CD8-positive, alpha-beta memory T cell (primary cell): ENCODE measurements at regions of chr11 and their contacts with region 1.

Region 1: DNA sequence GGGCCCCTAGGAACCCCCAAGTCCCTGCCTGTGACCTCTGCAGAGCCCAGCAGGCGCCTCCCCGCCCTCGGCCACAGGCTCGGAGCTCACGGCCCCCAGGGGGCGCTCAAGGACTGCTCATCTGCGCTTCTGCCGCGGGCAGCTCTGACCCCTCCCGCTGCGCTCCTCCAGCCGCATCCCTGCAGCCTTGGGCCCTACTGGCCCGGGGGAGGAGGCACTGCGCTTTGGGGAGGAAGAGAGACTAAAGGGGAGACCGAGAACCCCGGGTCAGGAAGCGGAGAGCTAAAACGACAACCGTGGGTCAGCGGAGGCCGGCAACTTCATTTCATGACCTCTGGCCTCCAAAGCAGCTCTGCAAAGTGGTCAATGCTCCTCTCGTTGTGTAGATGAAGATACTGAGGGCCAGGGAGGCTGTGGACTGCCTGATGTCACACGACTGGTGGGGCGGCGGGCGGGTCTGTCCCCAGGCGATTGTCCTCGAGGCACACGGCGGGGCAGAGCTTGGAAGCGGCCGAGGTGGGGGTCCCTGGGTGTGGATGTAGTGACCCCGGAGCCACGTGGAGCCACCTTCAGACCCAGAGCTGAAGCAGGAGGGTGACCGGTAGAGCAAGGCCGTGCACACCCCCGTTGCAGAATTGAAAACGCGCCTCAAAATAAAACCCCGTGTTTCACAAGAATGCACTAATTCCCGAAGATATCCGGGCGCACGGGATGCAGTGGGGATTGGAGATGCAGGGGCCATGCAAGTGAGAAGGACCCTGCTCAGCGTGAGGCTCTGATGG is 2.7 kb upstream of the KRTAP5-6 start:
- DNase-seq: peak; percentile 63 to 82 (median 73)
- H3K4me3 ChIP-seq: no peak overlapping the region
- H3K4me3 Mint-ChIP-seq: no peak overlapping the region
- H3K27ac ChIP-seq: no peak overlapping the region
- H3K27ac Mint-ChIP-seq: peak overlapping the region in 1 of 8 donors; percentile 43
- H3K4me1 ChIP-seq: peaks cover 13% of the 10 kb centered on the region
- H3K4me1 Mint-ChIP-seq: peaks cover 4 to 9% (median 7%) of the 10 kb centered on the region in 3 donors
- H3K27me3 ChIP-seq: peaks cover 4% of the 10 kb centered on the region
- H3K27me3 Mint-ChIP-seq: peaks cover 17 to 43% of the 10 kb centered on the region in 2 donors

Region 2: DNA sequence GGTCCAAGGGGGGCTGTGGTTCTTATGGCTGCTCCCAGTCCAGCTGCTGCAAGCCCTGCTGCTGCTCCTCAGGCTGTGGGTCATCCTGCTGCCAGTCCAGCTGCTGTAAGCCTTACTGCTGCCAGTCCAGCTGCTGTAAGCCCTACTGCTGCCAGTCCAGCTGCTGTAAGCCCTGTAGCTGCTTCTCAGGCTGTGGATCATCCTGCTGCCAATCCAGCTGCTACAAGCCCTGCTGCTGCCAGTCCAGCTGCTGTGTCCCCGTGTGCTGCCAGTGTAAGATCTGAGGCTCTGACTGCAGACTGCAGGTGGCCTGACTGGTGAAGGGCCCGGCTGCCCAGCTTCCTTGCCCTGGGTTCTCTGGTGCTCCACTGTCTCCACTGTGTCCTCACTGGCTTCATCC is 64.0 kb before region 1 on chr11:
- CTCF ChIA-PET with region 1: no interaction called
- POLR2A ChIA-PET with region 1: no interaction called
- DNase-seq: no peak
- H3K4me3 ChIP-seq: no peak overlapping the region
- H3K4me3 Mint-ChIP-seq: no peak overlapping the region
- H3K27ac ChIP-seq: no peak overlapping the region
- H3K27ac Mint-ChIP-seq: no peak overlapping the region
- H3K4me1 ChIP-seq: peaks cover 7% of the 10 kb centered on the region
- H3K4me1 Mint-ChIP-seq: peaks cover 0 to 13% (median 6%) of the 10 kb centered on the region in 3 donors
- H3K27me3 ChIP-seq: peaks cover 17% of the 10 kb centered on the region
- H3K27me3 Mint-ChIP-seq: peaks cover 20 to 53% of the 10 kb centered on the region in 2 donors

Region 3: GRCh38 chr11:1652771-1653540 is 41.3 kb before region 1 on chr11:
- CTCF ChIA-PET with region 1: interaction called, 49 read pairs
- POLR2A ChIA-PET with region 1: no interaction called
- DNase-seq: peak; percentile 65 to 82 (median 71)
- H3K4me3 ChIP-seq: no peak overlapping the region
- H3K4me3 Mint-ChIP-seq: no peak overlapping the region
- H3K27ac ChIP-seq: no peak overlapping the region
- H3K27ac Mint-ChIP-seq: no peak overlapping the region
- H3K4me1 ChIP-seq: no peaks in the 10 kb centered on the region
- H3K4me1 Mint-ChIP-seq: no peaks in the 10 kb centered on the region
- H3K27me3 ChIP-seq: peaks cover 13% of the 10 kb centered on the region
- H3K27me3 Mint-ChIP-seq: peaks cover 15 to 45% of the 10 kb centered on the region in 2 donors

Region 4: GRCh38 chr11:1668911-1669473 is 25.3 kb before region 1 on chr11:
- CTCF ChIA-PET with region 1: no interaction called
- POLR2A ChIA-PET with region 1: no interaction called
- DNase-seq: peak in 1 of 5 donors; percentile 10
- H3K4me3 ChIP-seq: no peak overlapping the region
- H3K4me3 Mint-ChIP-seq: peak overlapping the region in 1 of 7 donors; percentile 19
- H3K27ac ChIP-seq: no peak overlapping the region
- H3K27ac Mint-ChIP-seq: no peak overlapping the region
- H3K4me1 ChIP-seq: no peaks in the 10 kb centered on the region
- H3K4me1 Mint-ChIP-seq: peaks cover 0 to 10% (median 5%) of the 10 kb centered on the region in 3 donors
- H3K27me3 ChIP-seq: no peaks in the 10 kb centered on the region
- H3K27me3 Mint-ChIP-seq: peaks cover 17 to 22% of the 10 kb centered on the region in 2 donors

Region 5: DNA sequence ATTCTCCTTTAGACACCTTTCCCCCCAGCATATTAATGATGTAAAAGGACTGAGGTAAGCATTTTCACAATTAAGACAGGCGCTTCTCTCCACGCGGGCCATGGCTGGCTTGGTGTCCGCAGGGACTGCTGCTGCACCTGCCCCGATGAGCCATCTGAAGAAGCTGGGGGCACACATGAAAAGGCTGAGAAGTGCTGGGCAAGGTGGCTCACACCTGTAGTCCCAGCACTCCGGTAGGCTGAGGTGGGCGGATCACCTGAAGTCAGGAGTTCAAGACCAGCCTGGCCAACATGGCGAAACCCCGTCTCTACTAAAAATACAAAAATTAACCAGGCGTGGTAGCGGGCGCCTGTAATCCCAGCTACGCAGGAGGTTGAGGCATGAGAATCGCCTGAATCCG is 24.1 kb after region 1 on chr11:
- CTCF ChIA-PET with region 1: no interaction called
- POLR2A ChIA-PET with region 1: no interaction called
- DNase-seq: no peak
- H3K4me3 ChIP-seq: no peak overlapping the region
- H3K4me3 Mint-ChIP-seq: no peak overlapping the region
- H3K27ac ChIP-seq: no peak overlapping the region
- H3K27ac Mint-ChIP-seq: no peak overlapping the region
- H3K4me1 ChIP-seq: no peaks in the 10 kb centered on the region
- H3K4me1 Mint-ChIP-seq: no peaks in the 10 kb centered on the region
- H3K27me3 ChIP-seq: no peaks in the 10 kb centered on the region
- H3K27me3 Mint-ChIP-seq: peaks cover 0 to 12% of the 10 kb centered on the region in 2 donors

Region 6: DNA sequence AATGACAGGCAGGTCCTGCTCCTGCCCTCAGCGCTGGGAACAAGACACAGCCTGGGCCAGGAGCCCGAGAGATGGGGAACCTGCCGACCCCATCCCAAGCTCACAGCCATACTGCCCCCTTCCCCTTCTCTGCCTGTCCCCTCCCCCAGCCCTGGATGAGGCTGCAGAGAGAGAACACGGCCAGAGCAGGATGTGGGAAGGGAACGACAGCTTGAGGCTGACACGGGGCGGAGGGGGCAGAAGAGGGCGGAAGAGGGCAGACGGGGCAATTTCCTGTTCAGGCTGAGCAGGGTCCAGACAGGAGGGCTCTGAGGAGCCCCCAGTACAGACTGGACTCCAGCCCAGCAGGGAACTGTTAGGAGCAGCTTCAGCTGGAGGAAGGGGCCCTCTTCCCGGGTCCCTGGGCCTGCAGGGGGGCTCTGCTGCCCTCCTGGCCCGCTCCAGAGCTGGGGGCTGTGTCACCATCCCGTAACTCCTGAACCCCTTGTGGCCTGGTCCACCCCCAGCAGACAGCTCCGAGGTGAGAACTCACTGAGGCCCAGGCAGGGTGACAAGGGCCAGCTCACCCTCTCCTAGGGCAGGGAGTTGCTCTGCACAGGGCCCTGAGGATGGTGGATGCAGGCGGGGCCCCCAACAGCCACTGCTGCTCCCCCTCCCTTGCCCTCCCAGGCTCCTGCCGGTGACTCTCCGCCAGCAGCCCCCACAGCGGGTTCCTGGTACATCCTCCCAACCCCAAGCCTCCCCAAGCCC is 63.8 kb after region 1 on chr11:
- CTCF ChIA-PET with region 1: interaction called, 10 read pairs
- POLR2A ChIA-PET with region 1: no interaction called
- DNase-seq: peak; percentile 31 to 69 (median 56)
- H3K4me3 ChIP-seq: peak overlapping the region; percentile 43
- H3K4me3 Mint-ChIP-seq: peak overlapping the region; percentile 69 to 90 (median 78)
- H3K27ac ChIP-seq: peak overlapping the region; percentile 47
- H3K27ac Mint-ChIP-seq: peak overlapping the region; percentile 78 to 96 (median 88)
- H3K4me1 ChIP-seq: peaks cover 84% of the 10 kb centered on the region
- H3K4me1 Mint-ChIP-seq: peaks cover 55 to 85% (median 66%) of the 10 kb centered on the region in 3 donors
- H3K27me3 ChIP-seq: no peaks in the 10 kb centered on the region
- H3K27me3 Mint-ChIP-seq: no peaks in the 10 kb centered on the region

Region 7: GRCh38 chr11:1792461-1792860 is 98.2 kb after region 1 on chr11:
- CTCF ChIA-PET with region 1: interaction called, 11 read pairs
- POLR2A ChIA-PET with region 1: no interaction called
- DNase-seq: peak in 1 of 5 donors; percentile 5
- H3K4me3 ChIP-seq: no peak overlapping the region
- H3K4me3 Mint-ChIP-seq: peak overlapping the region; percentile 49 to 87 (median 76)
- H3K27ac ChIP-seq: no peak overlapping the region
- H3K27ac Mint-ChIP-seq: peak overlapping the region; percentile 14 to 89 (median 69)
- H3K4me1 ChIP-seq: no peaks in the 10 kb centered on the region
- H3K4me1 Mint-ChIP-seq: peaks cover 8 to 11% (median 8%) of the 10 kb centered on the region in 3 donors
- H3K27me3 ChIP-seq: no peaks in the 10 kb centered on the region
- H3K27me3 Mint-ChIP-seq: peaks cover 10 to 27% of the 10 kb centered on the region in 2 donors

Region 8: GRCh38 chr11:1832211-1832919 is 138.1 kb after region 1 on chr11:
- CTCF ChIA-PET with region 1: interaction called, 286 read pairs
- POLR2A ChIA-PET with region 1: interaction called, 14 read pairs
- DNase-seq: peak; percentile 57 to 73 (median 67)
- H3K4me3 ChIP-seq: no peak overlapping the region
- H3K4me3 Mint-ChIP-seq: no peak overlapping the region
- H3K27ac ChIP-seq: no peak overlapping the region
- H3K27ac Mint-ChIP-seq: peak overlapping the region in 1 of 8 donors; percentile 15
- H3K4me1 ChIP-seq: peaks cover 1% of the 10 kb centered on the region
- H3K4me1 Mint-ChIP-seq: peaks cover 0 to 2% (median 0%) of the 10 kb centered on the region in 3 donors
- H3K27me3 ChIP-seq: no peaks in the 10 kb centered on the region
- H3K27me3 Mint-ChIP-seq: peaks cover 15% of the 10 kb centered on the region in 2 donors

Region 9: DNA sequence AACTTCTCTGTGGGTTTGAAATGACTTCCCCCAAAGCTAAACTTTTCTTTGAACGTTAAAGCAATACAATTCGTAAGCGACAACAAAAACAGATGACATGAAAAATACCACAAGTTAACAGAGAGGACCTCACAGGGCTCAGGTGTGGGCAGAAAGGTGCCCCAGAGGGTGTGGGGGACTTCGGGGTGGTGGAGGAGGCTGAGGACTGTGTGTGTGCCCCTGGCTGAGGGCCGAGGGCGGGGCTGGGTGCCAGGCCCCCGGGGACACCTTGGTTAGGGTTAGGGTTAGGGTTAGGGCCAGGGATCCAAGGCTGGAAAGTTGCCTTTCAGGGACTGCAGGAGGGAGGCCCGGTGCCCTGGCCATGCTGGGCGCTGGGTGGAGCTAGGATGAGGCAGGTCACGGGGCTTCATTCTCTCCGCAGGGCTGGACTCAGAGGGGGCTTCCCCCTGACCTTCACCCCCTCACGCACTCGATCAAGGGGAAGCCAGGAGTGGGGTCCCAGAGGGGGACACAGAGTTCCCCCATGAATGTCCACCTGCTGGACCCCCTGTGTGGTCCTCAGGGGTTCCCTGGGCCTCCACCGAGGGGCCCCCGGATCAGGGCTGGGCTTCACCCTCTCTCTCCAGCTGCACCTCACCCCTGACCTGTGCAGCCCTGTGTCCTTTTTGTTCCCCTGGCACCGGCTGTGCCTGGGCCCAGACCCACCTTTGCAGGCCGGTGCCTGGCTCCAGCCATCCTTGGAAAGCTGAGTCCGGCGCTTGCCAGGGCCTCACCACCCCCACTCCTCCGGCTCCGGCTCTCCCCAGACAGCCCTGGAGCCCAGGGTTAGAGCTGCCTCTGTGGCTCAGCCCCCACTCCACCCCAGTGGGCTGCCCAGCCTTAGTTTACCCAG is 151.6 kb after region 1 on chr11:
- CTCF ChIA-PET with region 1: interaction called, 36 read pairs
- POLR2A ChIA-PET with region 1: no interaction called
- DNase-seq: peak in 3 of 5 donors; percentile 44 to 69 (median 63)
- H3K4me3 ChIP-seq: peak overlapping the region; percentile 37
- H3K4me3 Mint-ChIP-seq: peak overlapping the region; percentile 65 to 86 (median 81)
- H3K27ac ChIP-seq: no peak overlapping the region
- H3K27ac Mint-ChIP-seq: peak overlapping the region; percentile 91 to 98 (median 95)
- H3K4me1 ChIP-seq: peaks cover 66% of the 10 kb centered on the region
- H3K4me1 Mint-ChIP-seq: peaks cover 54 to 81% (median 63%) of the 10 kb centered on the region in 3 donors
- H3K27me3 ChIP-seq: no peaks in the 10 kb centered on the region
- H3K27me3 Mint-ChIP-seq: peaks cover 0 to 1% of the 10 kb centered on the region in 2 donors

Region 10: GRCh38 chr11:2002807-2003206 is 308.6 kb after region 1 on chr11:
- CTCF ChIA-PET with region 1: interaction called, 58 read pairs
- POLR2A ChIA-PET with region 1: no interaction called
- DNase-seq: no peak
- H3K4me3 ChIP-seq: no peak overlapping the region
- H3K4me3 Mint-ChIP-seq: no peak overlapping the region
- H3K27ac ChIP-seq: no peak overlapping the region
- H3K27ac Mint-ChIP-seq: no peak overlapping the region
- H3K4me1 ChIP-seq: no peaks in the 10 kb centered on the region
- H3K4me1 Mint-ChIP-seq: no peaks in the 10 kb centered on the region
- H3K27me3 ChIP-seq: no peaks in the 10 kb centered on the region
- H3K27me3 Mint-ChIP-seq: no peaks in the 10 kb centered on the region